ENCODE measurements at regions of chr10 and their contacts with region 1.

Region 1: GRCh38 chr10:92573798-92574547 is at the start of gene IDE:
- DNase-seq: peak; percentile 76
- ATAC-seq: peak; percentile 74
- H3K4me3 ChIP-seq: peak within 1 kb of the TSS; percentile 82
- H3K27ac ChIP-seq: peak within 1 kb of the TSS; percentile 83
- H3K4me1 ChIP-seq: peaks cover 21% of the 10 kb centered on the region
- H3K27me3 ChIP-seq: no peaks in the 10 kb centered on the region
- CTCF ChIP-seq: peak; percentile 73
- total RNA-seq, gene IDE: 23.4 and 28.7 TPM in 2 replicates

Region 2: GRCh38 chr10:92506336-92506735 is 67.6 kb before region 1 on chr10:
- CTCF ChIA-PET with region 1: no interaction called
- POLR2A ChIA-PET with region 1: no interaction called
- intact Hi-C with region 1: no loop called
- DNase-seq: no peak
- ATAC-seq: no peak
- H3K4me3 ChIP-seq: no peak overlapping the region
- H3K27ac ChIP-seq: no peak overlapping the region
- H3K4me1 ChIP-seq: no peaks in the 10 kb centered on the region
- H3K27me3 ChIP-seq: no peaks in the 10 kb centered on the region
- CTCF ChIP-seq: no peak

Region 3: GRCh38 chr10:92517034-92517655 is 56.8 kb before region 1 on chr10:
- CTCF ChIA-PET with region 1: interaction called, 5 read pairs
- POLR2A ChIA-PET with region 1: no interaction called
- intact Hi-C with region 1: loop called (anchors 1 kb)
- DNase-seq: peak; percentile 72
- ATAC-seq: peak; percentile 92
- H3K4me3 ChIP-seq: no peak overlapping the region
- H3K27ac ChIP-seq: no peak overlapping the region
- H3K4me1 ChIP-seq: no peaks in the 10 kb centered on the region
- H3K27me3 ChIP-seq: no peaks in the 10 kb centered on the region
- CTCF ChIP-seq: peak; percentile 83

Region 4: GRCh38 chr10:92550927-92551326 is 23.0 kb before region 1 on chr10:
- CTCF ChIA-PET with region 1: no interaction called
- POLR2A ChIA-PET with region 1: no interaction called
- intact Hi-C with region 1: loop called (anchors 1 kb)
- DNase-seq: peak; percentile 7
- ATAC-seq: peak; percentile 43
- H3K4me3 ChIP-seq: no peak overlapping the region
- H3K27ac ChIP-seq: no peak overlapping the region
- H3K4me1 ChIP-seq: no peaks in the 10 kb centered on the region
- H3K27me3 ChIP-seq: no peaks in the 10 kb centered on the region
- CTCF ChIP-seq: no peak

Region 5: DNA sequence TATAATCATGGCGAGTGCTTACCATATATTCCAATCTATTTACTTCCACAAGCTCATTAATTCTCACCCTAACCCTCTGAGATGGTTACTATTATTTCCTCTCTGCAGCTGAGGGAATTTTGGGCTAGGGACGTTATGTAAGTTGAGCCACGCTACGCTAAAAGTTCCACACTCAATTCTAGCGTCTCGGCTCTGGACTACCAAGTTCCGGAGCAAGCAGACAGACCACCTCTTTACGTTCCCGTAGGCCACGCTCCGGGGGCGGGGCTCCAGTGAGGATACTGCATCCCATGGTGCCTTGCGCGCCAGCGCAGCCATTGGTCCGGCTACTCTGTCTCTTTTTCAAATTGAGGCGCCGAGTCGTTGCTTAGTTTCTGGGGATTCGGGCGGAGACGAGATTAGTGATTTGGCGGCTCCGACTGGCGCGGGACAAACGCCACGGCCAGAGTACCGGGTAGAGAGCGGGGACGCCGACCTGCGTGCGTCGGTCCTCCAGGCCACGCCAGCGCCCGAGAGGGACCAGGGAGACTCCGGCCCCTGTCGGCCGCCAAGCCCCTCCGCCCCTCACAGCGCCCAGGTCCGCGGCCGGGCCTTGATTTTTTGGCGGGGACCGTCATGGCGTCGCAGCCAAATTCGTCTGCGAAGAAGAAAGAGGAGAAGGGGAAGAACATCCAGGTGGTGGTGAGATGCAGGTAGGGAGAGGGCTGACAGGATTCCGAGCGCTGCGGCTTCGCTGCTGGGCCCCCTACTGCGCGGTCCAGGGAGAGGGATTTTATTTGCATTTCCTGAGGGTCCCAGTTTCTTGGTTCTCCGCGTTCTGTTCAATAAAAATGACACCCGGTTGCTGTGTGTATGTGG is 19.0 kb after region 1 on chr10 and contains the start of gene KIF11:
- CTCF ChIA-PET with region 1: no interaction called
- POLR2A ChIA-PET with region 1: no interaction called
- intact Hi-C with region 1: no loop called
- DNase-seq: peak; percentile 93
- ATAC-seq: peak; percentile 76
- H3K4me3 ChIP-seq: peak within 1 kb of the TSS; percentile 90
- H3K27ac ChIP-seq: peak within 1 kb of the TSS; percentile 95
- H3K4me1 ChIP-seq: peaks cover 25% of the 10 kb centered on the region
- H3K27me3 ChIP-seq: no peaks in the 10 kb centered on the region
- CTCF ChIP-seq: no peak
- total RNA-seq, gene KIF11: 25.5 and 26.2 TPM in 2 replicates

Region 6: GRCh38 chr10:93288654-93289634 is 715.0 kb after region 1 on chr10:
- CTCF ChIA-PET with region 1: no interaction called
- POLR2A ChIA-PET with region 1: no interaction called
- intact Hi-C with region 1: no loop called
- DNase-seq: peak; percentile 92
- ATAC-seq: peak; percentile 97
- H3K4me3 ChIP-seq: no peak overlapping the region
- H3K27ac ChIP-seq: no peak overlapping the region
- H3K4me1 ChIP-seq: peaks cover 10% of the 10 kb centered on the region
- H3K27me3 ChIP-seq: no peaks in the 10 kb centered on the region
- CTCF ChIP-seq: peak; percentile 75